Activated B cell treated with CpG ODN at 0.5 μM for 24 hours (primary cell): ENCODE measurements at regions of chr2 and their contacts with region 1.

Region 1: GRCh38 chr2:84919885-84920580 is 14.6 kb downstream of the TMSB10 start:
- DNase-seq: no peak
- ATAC-seq: peak; percentile 59
- H3K4me3 Mint-ChIP-seq: peak overlapping the region; percentile 73
- H3K27ac Mint-ChIP-seq: peak overlapping the region; percentile 96
- H3K4me1 Mint-ChIP-seq: peaks cover 63% of the 10 kb centered on the region
- H3K27me3 Mint-ChIP-seq: no peaks in the 10 kb centered on the region
- CTCF ChIP-seq: no peak

Region 2: GRCh38 chr2:84335857-84336256 is 584.2 kb before region 1 on chr2:
- CTCF ChIA-PET with region 1: no interaction called
- POLR2A ChIA-PET with region 1: no interaction called
- intact Hi-C with region 1: no loop called
- DNase-seq: no peak
- ATAC-seq: no peak
- H3K4me3 Mint-ChIP-seq: no peak overlapping the region
- H3K27ac Mint-ChIP-seq: no peak overlapping the region
- H3K4me1 Mint-ChIP-seq: no peaks in the 10 kb centered on the region
- H3K27me3 Mint-ChIP-seq: no peaks in the 10 kb centered on the region
- CTCF ChIP-seq: no peak

Region 3: GRCh38 chr2:84888401-84889276 is 31.4 kb before region 1 on chr2:
- CTCF ChIA-PET with region 1: interaction called, 68 read pairs
- POLR2A ChIA-PET with region 1: interaction called, 33 read pairs
- intact Hi-C with region 1: loop called (anchors 1 kb)
- DNase-seq: peak; percentile 35
- ATAC-seq: peak; percentile 100
- H3K4me3 Mint-ChIP-seq: peak overlapping the region; percentile 77
- H3K27ac Mint-ChIP-seq: peak overlapping the region; percentile 96
- H3K4me1 Mint-ChIP-seq: peaks cover 29% of the 10 kb centered on the region
- H3K27me3 Mint-ChIP-seq: no peaks in the 10 kb centered on the region
- CTCF ChIP-seq: no peak

Region 4: GRCh38 chr2:84894758-84895520 is 25.1 kb before region 1 on chr2:
- CTCF ChIA-PET with region 1: interaction called, 23 read pairs
- POLR2A ChIA-PET with region 1: interaction called, 28 read pairs
- intact Hi-C with region 1: no loop called
- DNase-seq: no peak
- ATAC-seq: peak; percentile 68
- H3K4me3 Mint-ChIP-seq: peak overlapping the region; percentile 60
- H3K27ac Mint-ChIP-seq: peak overlapping the region; percentile 89
- H3K4me1 Mint-ChIP-seq: peaks cover 46% of the 10 kb centered on the region
- H3K27me3 Mint-ChIP-seq: no peaks in the 10 kb centered on the region
- CTCF ChIP-seq: no peak

Region 5: DNA sequence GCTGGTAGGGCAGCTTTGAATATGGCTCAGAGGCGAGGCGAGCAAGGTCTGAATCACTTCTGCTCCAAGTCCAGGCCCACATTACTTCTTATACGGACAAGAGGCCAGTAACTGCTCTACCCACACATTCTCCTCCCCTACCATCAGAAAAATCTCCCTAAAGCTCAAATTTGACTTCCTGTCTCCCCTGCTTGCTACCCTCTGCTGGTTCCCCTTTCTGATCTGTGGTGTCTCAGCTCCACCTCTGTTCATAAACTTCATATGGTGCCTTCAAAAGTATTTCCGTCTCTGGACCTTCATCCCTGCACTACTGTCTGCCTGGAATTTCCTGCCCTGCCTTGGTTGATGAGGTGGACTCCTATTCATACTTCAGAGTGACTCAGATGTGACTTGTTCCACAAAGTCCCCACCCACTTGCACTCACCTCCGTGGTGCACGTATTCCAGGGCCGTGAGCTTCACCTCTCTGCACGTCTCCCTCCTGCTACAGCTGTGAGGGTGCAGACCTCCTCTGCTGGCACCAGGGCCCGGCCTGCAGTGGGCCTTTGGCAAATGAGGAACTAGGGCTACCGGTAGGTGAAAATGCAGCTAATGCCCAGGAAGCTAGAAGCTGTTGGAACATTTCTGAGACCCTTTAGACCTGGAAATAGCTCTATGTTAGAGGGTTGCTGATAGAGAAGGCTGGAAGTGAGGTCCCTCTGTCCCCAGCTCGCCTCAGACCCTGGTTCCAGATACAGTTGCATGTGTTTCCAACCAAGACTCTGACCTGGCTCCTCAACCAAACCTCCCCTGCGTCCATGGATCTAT is 26.4 kb after region 1 on chr2:
- CTCF ChIA-PET with region 1: interaction called, 186 read pairs
- POLR2A ChIA-PET with region 1: interaction called, 59 read pairs
- intact Hi-C with region 1: no loop called
- DNase-seq: peak; percentile 44
- ATAC-seq: peak; percentile 77
- H3K4me3 Mint-ChIP-seq: peak overlapping the region; percentile 72
- H3K27ac Mint-ChIP-seq: peak overlapping the region; percentile 97
- H3K4me1 Mint-ChIP-seq: peaks cover 54% of the 10 kb centered on the region
- H3K27me3 Mint-ChIP-seq: no peaks in the 10 kb centered on the region
- CTCF ChIP-seq: no peak

Region 6: GRCh38 chr2:84960157-84960506 is 40.1 kb after region 1 on chr2:
- CTCF ChIA-PET with region 1: no interaction called
- POLR2A ChIA-PET with region 1: no interaction called
- intact Hi-C with region 1: no loop called
- DNase-seq: no peak
- ATAC-seq: peak; percentile 38
- H3K4me3 Mint-ChIP-seq: peak overlapping the region; percentile 33
- H3K27ac Mint-ChIP-seq: peak overlapping the region; percentile 71
- H3K4me1 Mint-ChIP-seq: peaks cover 61% of the 10 kb centered on the region
- H3K27me3 Mint-ChIP-seq: no peaks in the 10 kb centered on the region
- CTCF ChIP-seq: no peak

Region 7: DNA sequence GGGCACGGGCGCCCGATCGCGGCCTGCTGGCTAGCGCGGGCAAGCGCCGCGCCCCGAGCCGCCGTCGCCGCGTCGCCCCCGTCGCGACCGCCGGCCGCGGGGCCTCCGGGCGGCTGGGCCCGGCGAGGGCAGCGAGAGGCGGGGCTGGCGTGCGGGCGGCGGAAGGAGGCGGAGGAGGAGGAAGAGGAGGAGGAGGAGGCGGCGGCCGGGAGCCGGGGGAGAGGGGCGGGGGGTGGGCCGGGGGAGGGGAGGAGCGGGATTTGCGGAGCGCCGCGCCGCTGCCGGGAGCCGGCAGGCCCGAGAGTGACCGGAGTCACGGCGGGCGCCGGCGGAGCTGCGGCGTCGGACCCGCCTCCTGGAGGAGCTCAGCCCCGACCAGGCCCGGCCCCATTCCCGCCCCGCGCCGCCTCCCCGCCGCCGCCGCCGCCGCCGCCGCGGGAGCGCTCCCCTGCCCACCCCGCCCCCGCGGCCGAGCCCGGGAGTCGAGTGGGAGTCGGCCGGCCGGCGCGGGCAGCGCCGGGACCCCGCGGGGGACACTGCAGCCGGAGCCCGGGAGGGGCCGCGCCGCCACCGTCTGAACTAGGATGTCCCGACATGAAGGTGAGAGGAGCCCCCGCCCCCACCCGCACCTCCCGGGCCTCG is 51.0 kb after region 1 on chr2 and contains the start of gene KCMF1:
- CTCF ChIA-PET with region 1: interaction called, 19 read pairs
- POLR2A ChIA-PET with region 1: interaction called, 25 read pairs
- intact Hi-C with region 1: no loop called
- DNase-seq: peak; percentile 77
- ATAC-seq: peak; percentile 56
- H3K4me3 Mint-ChIP-seq: peak within 1 kb of the TSS; percentile 97
- H3K27ac Mint-ChIP-seq: peak within 1 kb of the TSS; percentile 98
- H3K4me1 Mint-ChIP-seq: peaks cover 57% of the 10 kb centered on the region
- H3K27me3 Mint-ChIP-seq: no peaks in the 10 kb centered on the region
- CTCF ChIP-seq: no peak
- total RNA-seq, gene KCMF1: 77.1 and 96.6 TPM in 2 replicates